Activated CD8-positive, alpha-beta T cell treated with anti-CD3 and anti-CD28 coated beads, Interleukin-2, amount 10 ng/mL, durations not matched to agents 7 days and 5 days (primary cell): ENCODE measurements at regions of chr2 and their contacts with region 1.

Region 1: GRCh38 chr2:74334931-74335333 is 8.3 kb downstream of the SLC4A5 start:
- DNase-seq: peak; percentile 81
- ATAC-seq: peak; percentile 88
- H3K4me3 Mint-ChIP-seq: no peak overlapping the region
- H3K27ac Mint-ChIP-seq: no peak overlapping the region
- H3K4me1 Mint-ChIP-seq: peaks cover 4% of the 10 kb centered on the region
- H3K27me3 Mint-ChIP-seq: no peaks in the 10 kb centered on the region

Region 2: GRCh38 chr2:74250189-74250631 is 84.7 kb before region 1 on chr2:
- CTCF ChIA-PET with region 1: interaction called, 121 read pairs
- POLR2A ChIA-PET with region 1: interaction called, 4 read pairs
- DNase-seq: peak; percentile 68
- ATAC-seq: peak; percentile 77
- H3K4me3 Mint-ChIP-seq: no peak overlapping the region
- H3K27ac Mint-ChIP-seq: no peak overlapping the region
- H3K4me1 Mint-ChIP-seq: peaks cover 2% of the 10 kb centered on the region
- H3K27me3 Mint-ChIP-seq: no peaks in the 10 kb centered on the region

Region 3: GRCh38 chr2:74267068-74267467 is 67.9 kb before region 1 on chr2:
- CTCF ChIA-PET with region 1: interaction called, 110 read pairs
- POLR2A ChIA-PET with region 1: no interaction called
- DNase-seq: peak; percentile 86
- ATAC-seq: peak; percentile 98
- H3K4me3 Mint-ChIP-seq: peak overlapping the region; percentile 53
- H3K27ac Mint-ChIP-seq: peak overlapping the region; percentile 86
- H3K4me1 Mint-ChIP-seq: peaks cover 23% of the 10 kb centered on the region
- H3K27me3 Mint-ChIP-seq: no peaks in the 10 kb centered on the region

Region 4: GRCh38 chr2:74304332-74305148 is 30.4 kb before region 1 on chr2:
- CTCF ChIA-PET with region 1: interaction called, 10 read pairs
- POLR2A ChIA-PET with region 1: no interaction called
- DNase-seq: no peak
- ATAC-seq: no peak
- H3K4me3 Mint-ChIP-seq: no peak overlapping the region
- H3K27ac Mint-ChIP-seq: no peak overlapping the region
- H3K4me1 Mint-ChIP-seq: no peaks in the 10 kb centered on the region
- H3K27me3 Mint-ChIP-seq: no peaks in the 10 kb centered on the region

Region 5: GRCh38 chr2:74345272-74345943 is 10.5 kb after region 1 on chr2:
- CTCF ChIA-PET with region 1: interaction called, 42 read pairs
- POLR2A ChIA-PET with region 1: no interaction called
- DNase-seq: peak; percentile 25
- ATAC-seq: no peak
- H3K4me3 Mint-ChIP-seq: no peak overlapping the region
- H3K27ac Mint-ChIP-seq: no peak overlapping the region
- H3K4me1 Mint-ChIP-seq: peaks cover 13% of the 10 kb centered on the region
- H3K27me3 Mint-ChIP-seq: no peaks in the 10 kb centered on the region

Region 6: DNA sequence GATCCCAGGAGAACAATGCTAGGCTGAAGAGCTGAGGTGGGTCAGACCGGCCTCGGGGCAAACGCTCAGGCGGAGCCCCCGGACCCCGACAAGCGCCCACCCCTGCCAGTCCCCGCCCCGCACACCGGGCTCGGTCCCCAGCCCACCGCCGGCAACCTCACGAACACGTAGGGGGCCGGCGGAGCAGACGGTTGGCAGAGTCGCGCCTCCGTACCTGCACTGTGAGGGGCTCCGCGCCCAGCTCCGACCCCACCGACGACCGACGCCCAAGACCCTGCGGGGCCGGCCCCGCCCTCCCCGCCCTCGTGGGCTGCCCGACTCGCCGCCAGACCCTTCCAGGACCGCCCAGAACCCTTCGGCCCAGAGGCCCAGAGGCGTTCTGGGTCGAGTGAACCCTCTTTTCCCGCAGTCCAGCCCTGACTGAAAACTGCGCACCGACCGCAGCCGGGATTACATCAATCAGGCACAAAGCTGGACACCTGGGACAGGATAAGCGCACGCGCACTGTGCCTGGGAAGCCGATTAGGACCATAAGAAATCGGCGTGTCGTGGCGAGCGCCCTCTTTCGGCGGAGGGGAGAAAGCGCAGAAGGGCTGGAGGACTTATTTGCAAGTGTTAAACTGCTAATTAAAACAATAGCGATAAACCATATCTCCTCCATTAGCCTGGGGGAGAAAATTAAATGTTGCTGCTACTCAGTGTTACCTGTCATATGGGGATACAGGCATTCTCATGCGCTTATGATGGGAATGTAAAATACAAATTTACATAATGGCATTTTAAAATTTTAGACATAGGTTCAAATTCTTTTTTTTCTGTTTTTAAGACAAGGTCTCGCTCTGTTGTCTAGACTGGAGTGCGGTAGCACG is 56.9 kb after region 1 on chr2:
- CTCF ChIA-PET with region 1: interaction called, 35 read pairs
- POLR2A ChIA-PET with region 1: no interaction called
- DNase-seq: peak; percentile 97
- ATAC-seq: peak; percentile 88
- H3K4me3 Mint-ChIP-seq: peak overlapping the region; percentile 93
- H3K27ac Mint-ChIP-seq: peak overlapping the region; percentile 99
- H3K4me1 Mint-ChIP-seq: peaks cover 7% of the 10 kb centered on the region
- H3K27me3 Mint-ChIP-seq: peaks cover 6% of the 10 kb centered on the region

Region 7: DNA sequence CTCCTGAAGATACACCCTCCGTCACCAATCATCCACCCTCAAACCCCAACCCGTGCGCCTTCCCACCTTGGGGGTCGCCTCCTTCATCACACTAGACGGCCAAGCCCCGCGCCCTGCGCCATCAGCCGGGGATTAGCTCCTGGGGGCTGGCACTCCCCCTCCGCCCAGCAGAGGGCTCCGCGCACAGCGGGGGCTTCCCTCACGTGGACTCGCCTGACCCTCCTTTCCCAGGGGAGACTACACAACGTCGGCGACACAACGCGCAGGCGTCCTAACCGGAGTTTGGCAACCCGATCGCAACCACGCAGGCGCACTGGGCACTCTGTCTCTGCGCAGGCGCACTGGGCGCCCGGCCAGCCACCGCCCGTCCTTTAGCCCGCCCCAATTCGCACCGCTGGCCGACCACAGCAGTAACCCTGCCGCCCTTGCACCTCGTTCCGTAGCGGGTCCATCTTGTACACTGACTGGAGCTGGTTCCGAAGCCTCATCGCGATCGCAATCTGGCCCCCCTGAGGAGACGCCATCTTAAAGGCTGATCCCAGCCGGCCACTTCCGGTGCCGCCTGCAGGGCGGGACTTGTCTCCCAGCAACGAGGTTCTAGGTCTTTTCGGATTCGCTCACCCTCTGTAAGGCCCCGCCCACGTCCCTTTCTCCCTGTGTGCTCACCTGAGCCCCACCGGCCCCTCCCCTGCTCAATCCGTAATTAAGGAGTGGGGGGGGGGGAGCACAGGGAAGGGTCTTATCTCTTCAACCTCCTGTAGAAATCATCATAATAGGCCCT is 172.4 kb after region 1 on chr2 and contains the start of gene PCGF1:
- CTCF ChIA-PET with region 1: no interaction called
- POLR2A ChIA-PET with region 1: no interaction called
- DNase-seq: peak; percentile 99
- ATAC-seq: peak; percentile 90
- H3K4me3 Mint-ChIP-seq: peak within 1 kb of the TSS; percentile 100
- H3K27ac Mint-ChIP-seq: peak within 1 kb of the TSS; percentile 100
- H3K4me1 Mint-ChIP-seq: peaks cover 55% of the 10 kb centered on the region
- H3K27me3 Mint-ChIP-seq: peaks cover 35% of the 10 kb centered on the region
- total RNA-seq, gene PCGF1: 20.3 to 28.5 TPM